Activated naive CD4-positive, alpha-beta T cell treated with anti-CD3 and anti-CD28 coated beads, Interleukin-2, amount 10 ng/mL, durations not matched to agents 7 days and 5 days (primary cell): ENCODE measurements at regions of chr3 and their contacts with region 1.

Region 1: DNA sequence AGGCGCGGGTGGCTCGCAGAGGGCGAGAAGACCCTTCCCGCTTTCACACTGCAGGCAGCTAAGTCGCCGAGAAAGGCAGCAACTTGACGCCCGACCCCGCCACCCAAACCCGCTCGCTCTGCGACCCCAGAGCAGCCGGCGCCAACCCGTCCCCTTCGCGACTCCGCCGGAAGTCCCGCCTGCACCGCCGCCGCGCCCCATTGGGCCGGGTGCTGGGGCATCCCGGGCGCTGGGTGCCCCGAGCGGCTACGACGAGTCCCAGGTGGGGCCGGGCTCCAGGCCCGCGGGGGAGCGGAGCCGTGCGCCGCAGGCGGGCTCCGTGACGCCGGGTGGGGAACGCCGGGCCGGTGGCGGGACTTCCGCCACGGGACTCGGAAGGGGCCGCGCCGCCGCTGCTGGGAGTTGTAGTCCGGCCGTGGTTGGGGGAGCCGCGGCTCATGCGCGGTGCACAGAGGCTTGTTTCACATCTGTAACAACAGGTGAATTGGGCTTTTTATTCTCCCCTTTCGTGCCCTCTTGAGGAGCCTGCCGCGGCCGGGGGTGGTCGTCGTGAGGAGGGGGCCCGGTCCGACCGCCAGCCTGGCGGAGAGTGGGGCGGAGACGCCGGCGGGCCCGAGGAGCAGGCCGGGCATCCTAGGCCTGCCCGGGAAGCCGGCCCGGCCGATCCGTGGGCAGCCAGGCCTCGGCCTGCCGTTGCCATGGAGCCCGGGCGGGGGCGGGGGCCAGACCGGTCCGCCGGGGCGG is at the start of gene DHX30:
- DNase-seq: peak; percentile 88
- H3K4me3 Mint-ChIP-seq: peak within 1 kb of the TSS; percentile 98
- H3K27ac Mint-ChIP-seq: peak within 1 kb of the TSS; percentile 90
- H3K4me1 Mint-ChIP-seq: peaks cover 28% of the 10 kb centered on the region
- H3K27me3 Mint-ChIP-seq: peaks cover 8% of the 10 kb centered on the region

Region 2: DNA sequence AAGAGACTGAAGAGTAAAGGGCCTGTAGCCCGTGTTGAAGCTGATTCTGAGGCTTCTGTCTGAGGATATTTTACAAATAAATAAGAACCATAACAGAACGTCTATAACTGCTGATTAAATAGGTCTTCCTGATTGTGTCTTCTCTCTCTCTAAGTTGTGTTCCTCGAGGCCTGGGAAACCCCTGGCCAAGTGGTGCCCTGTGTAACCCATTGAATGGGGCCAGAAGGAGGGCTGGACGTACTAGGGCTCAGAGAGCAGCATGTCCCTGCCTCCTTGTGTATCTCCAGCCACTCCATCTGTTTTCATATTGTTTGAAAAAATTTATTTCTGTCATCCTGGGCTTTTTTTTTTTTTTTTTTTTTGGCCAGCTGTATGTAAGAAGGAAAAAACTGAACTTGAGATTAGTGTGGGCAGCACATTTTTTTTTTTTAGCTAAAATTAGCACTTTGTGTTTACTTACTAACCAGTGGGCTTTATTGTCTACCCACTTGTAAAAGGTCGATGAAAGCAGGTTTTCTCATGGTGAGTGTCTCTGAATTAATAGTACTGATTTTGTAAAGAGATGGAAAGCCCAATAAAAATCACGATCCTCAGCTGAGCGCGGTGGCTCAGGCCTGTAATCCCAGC is 10.8 kb after region 1 on chr3:
- CTCF ChIA-PET with region 1: no interaction called
- DNase-seq: no peak
- H3K4me3 Mint-ChIP-seq: no peak overlapping the region
- H3K27ac Mint-ChIP-seq: no peak overlapping the region
- H3K4me1 Mint-ChIP-seq: no peaks in the 10 kb centered on the region
- H3K27me3 Mint-ChIP-seq: no peaks in the 10 kb centered on the region

Region 3: DNA sequence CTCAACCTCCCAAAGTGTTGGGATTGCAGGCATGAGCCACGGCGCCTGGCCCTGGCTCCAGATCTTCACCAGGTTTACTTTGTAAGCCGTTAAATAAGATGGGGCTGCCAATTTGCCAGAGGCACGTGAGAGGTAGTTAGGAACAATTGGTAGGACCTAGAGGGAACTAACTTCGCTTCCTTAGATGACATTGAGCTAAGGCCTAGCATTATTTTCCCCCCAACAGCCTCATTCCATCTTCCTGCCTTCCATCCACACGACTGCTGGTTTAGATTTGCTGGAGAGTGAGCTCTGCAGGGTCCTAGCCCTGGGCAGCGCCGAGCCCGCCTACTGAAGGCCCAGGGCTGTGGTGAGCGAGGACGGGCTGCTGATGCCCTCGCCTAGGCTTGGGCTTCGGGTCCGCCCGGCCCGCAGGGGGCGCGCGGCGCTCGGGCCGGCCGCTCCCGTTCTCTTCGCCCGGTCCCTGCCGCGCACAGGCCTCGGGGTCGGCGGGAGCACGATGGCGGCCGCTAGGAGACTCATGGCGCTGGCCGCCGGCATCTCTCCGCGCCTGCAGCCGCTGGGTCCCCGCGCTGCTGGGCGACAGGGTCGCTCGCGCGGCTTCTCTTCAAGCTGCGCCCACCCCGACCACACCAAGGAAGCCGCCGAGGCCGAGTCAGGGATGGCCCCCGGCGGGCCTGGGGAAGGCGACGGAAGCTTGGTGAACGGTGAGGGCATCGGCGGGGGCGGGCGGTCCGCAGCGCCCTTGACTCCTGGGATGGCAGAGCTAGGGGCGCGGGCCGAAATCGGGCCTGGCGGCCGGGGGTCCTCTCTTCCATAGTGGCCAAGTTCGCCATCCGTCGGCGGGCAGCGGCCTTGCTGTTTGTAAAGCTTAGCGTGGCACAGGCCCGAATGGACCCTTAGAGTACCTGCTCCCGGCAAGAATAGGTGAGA is 21.9 kb after region 1 on chr3:
- CTCF ChIA-PET with region 1: interaction called, 11 read pairs
- DNase-seq: peak; percentile 80
- H3K4me3 Mint-ChIP-seq: peak overlapping the region; percentile 88
- H3K27ac Mint-ChIP-seq: peak overlapping the region; percentile 84
- H3K4me1 Mint-ChIP-seq: peaks cover 41% of the 10 kb centered on the region
- H3K27me3 Mint-ChIP-seq: no peaks in the 10 kb centered on the region

Region 4: DNA sequence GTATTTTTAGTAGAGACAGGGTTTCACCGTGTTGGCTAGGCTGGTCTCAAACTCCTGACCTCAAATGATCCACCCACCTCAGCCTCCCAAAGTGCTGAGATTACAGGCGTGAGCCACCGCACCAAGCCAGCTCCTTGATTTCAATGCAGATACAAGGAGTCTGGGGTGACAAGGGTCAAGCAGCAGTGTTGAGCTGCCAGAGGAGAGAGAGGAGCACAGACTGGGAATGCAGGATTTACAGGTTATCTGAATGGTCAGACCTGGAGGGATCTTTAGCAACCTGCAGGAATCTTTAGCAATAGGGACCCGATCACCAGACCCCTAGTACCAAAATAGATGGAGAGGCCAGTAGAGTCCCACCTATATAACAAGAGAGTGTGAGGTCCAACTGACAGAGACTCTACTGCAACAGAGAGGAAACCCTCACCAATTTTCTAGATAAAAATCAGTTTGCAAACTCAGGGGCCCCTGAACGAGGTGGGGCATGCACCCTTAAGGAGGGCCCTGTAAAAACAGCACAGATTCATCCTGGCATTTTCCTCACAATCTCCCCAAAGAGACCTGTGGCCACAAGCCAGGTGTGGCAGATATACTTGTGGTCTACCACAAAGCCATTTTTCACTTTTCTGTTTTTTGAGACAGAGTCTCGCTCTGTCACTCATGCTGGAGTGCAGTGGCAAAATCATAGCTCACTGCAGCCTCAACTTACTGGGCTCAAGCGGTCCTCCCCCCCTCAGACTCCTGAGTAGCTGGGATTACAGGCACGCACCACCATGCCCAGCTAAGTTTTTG is 711.7 kb after region 1 on chr3:
- CTCF ChIA-PET with region 1: no interaction called
- DNase-seq: peak; percentile 71
- H3K4me3 Mint-ChIP-seq: peak overlapping the region; percentile 40
- H3K27ac Mint-ChIP-seq: peak overlapping the region; percentile 85
- H3K4me1 Mint-ChIP-seq: peaks cover 80% of the 10 kb centered on the region
- H3K27me3 Mint-ChIP-seq: peaks cover 20% of the 10 kb centered on the region